Mammary epithelial cell (primary cell): ENCODE measurements at regions of chr2 and their contacts with region 1.

Region 1: GRCh38 chr2:240424341-240425235 is 10.9 kb upstream of the GPC1 start:
- DNase-seq: no peak
- H3K4me3 ChIP-seq: no peak overlapping the region
- H3K27ac ChIP-seq: no peak overlapping the region
- H3K4me1 ChIP-seq: no peaks in the 10 kb centered on the region
- H3K27me3 ChIP-seq: no peaks in the 10 kb centered on the region
- CTCF ChIP-seq: no peak

Region 2: DNA sequence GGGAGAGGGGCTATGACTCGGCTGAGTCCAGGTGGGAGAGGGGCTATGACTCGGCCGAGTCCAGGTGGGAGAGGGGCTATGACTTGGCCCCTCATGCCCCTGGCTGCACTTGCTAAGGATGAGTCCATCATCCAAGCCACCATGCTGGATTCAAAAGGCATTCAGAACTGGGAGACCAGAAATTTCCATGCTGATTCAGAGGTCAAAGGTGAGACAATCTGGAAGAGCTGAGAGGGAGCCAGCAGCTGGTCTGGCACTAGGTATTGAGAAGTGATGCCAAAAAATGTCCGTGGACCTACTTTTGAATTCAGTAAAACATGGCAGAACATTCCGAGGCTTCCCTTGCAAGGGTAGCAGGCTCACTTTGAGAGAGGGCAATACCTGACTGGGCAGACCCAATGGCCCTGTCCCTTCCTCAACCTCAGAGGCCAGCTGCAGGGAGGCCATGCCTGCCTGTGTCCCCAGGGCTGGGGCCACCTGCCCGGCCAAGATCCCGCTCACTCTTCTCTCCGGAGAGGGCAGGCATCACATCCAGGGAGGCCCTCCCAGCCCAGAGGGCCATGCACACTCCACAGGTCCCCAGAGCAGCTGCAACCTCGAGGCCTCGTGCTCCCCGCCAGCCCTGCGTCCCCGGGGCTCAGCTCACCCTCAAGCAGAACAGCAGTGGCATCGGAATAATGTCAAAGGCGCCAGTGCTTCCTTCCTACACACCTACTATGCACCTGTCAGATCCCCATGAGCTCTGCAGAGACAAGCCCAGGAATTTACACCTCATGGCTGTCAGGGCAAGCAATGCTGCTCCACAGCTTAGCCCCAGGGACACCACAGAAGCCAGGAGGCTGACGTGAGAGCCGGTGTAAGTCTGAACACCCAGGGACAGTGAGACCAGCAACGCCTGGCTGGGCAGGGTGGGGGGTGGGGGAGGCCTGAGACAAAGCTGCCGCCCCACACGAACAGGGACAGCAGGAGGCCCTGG is 69.3 kb before region 1 on chr2:
- CTCF ChIA-PET with region 1: no interaction called
- dilution Hi-C with region 1: no loop called
- in situ Hi-C with region 1: no loop called
- intact Hi-C with region 1: no loop called
- DNase-seq: peak; percentile 71
- H3K4me3 ChIP-seq: no peak overlapping the region
- H3K27ac ChIP-seq: no peak overlapping the region
- H3K4me1 ChIP-seq: no peaks in the 10 kb centered on the region
- H3K27me3 ChIP-seq: no peaks in the 10 kb centered on the region
- CTCF ChIP-seq: no peak

Region 3: GRCh38 chr2:240387669-240388358 is 36.8 kb before region 1 on chr2:
- CTCF ChIA-PET with region 1: no interaction called
- dilution Hi-C with region 1: loop called (anchors 5 kb)
- in situ Hi-C with region 1: no loop called
- intact Hi-C with region 1: no loop called
- DNase-seq: peak; percentile 72
- H3K4me3 ChIP-seq: no peak overlapping the region
- H3K27ac ChIP-seq: no peak overlapping the region
- H3K4me1 ChIP-seq: peaks cover 23% of the 10 kb centered on the region
- H3K27me3 ChIP-seq: no peaks in the 10 kb centered on the region
- CTCF ChIP-seq: no peak

Region 4: GRCh38 chr2:240840435-240841080 is 416.0 kb after region 1 on chr2:
- CTCF ChIA-PET with region 1: no interaction called
- dilution Hi-C with region 1: no loop called
- in situ Hi-C with region 1: no loop called
- intact Hi-C with region 1: no loop called
- DNase-seq: peak; percentile 40
- H3K4me3 ChIP-seq: no peak overlapping the region
- H3K27ac ChIP-seq: no peak overlapping the region
- H3K4me1 ChIP-seq: no peaks in the 10 kb centered on the region
- H3K27me3 ChIP-seq: peaks cover 7% of the 10 kb centered on the region
- CTCF ChIP-seq: peak; percentile 58 to 76